CD4-positive, alpha-beta T cell (primary cell): ENCODE measurements at regions of chrX and their contacts with region 1.

Region 1: GRCh38 chrX:2608638-2609430 is 82.3 kb upstream of the CD99 start:
- DNase-seq: peak; percentile 73 to 94 (median 84)
- ATAC-seq: peak; percentile 94
- H3K4me3 ChIP-seq: peak overlapping the region; percentile 96
- H3K4me3 Mint-ChIP-seq: peak overlapping the region; percentile 98
- H3K27ac ChIP-seq: peak overlapping the region; percentile 14 to 43
- H3K27ac Mint-ChIP-seq: peak overlapping the region; percentile 82
- H3K4me1 ChIP-seq: peaks cover 34% of the 10 kb centered on the region
- H3K4me1 Mint-ChIP-seq: peaks cover 63% of the 10 kb centered on the region
- H3K27me3 ChIP-seq: no peaks in the 10 kb centered on the region
- H3K27me3 Mint-ChIP-seq: no peaks in the 10 kb centered on the region
- CTCF ChIP-seq: no peak

Region 2: GRCh38 chrX:1591102-1591900 is 1017.5 kb before region 1 on chrX and contains the start of gene AKAP17A:
- CTCF ChIA-PET with region 1: no interaction called
- POLR2A ChIA-PET with region 1: no interaction called
- intact Hi-C with region 1: loop called in 1 of 2 experiments (anchors 5 kb)
- DNase-seq: peak; percentile 93 to 100 (median 98)
- ATAC-seq: peak; percentile 89
- H3K4me3 ChIP-seq: peak within 1 kb of the TSS; percentile 80
- H3K4me3 Mint-ChIP-seq: peak within 1 kb of the TSS; percentile 95
- H3K27ac ChIP-seq: peak within 1 kb of the TSS; percentile 53 to 55
- H3K27ac Mint-ChIP-seq: peak within 1 kb of the TSS; percentile 90
- H3K4me1 ChIP-seq: peaks cover 42% of the 10 kb centered on the region
- H3K4me1 Mint-ChIP-seq: peaks cover 43% of the 10 kb centered on the region
- H3K27me3 ChIP-seq: no peaks in the 10 kb centered on the region
- H3K27me3 Mint-ChIP-seq: no peaks in the 10 kb centered on the region
- CTCF ChIP-seq: no peak
- total RNA-seq, gene AKAP17A: 143 to 149 TPM

Region 3: GRCh38 chrX:1657367-1658070 is 951.3 kb before region 1 on chrX:
- CTCF ChIA-PET with region 1: no interaction called
- POLR2A ChIA-PET with region 1: no interaction called
- intact Hi-C with region 1: loop called in 1 of 2 experiments (anchors 5 kb)
- DNase-seq: peak in 13 of 14 experiments; percentile 11 to 91 (median 47)
- ATAC-seq: peak; percentile 37
- H3K4me3 ChIP-seq: peak overlapping the region; percentile 65
- H3K4me3 Mint-ChIP-seq: peak overlapping the region; percentile 87
- H3K27ac ChIP-seq: peak overlapping the region; percentile 59 to 80
- H3K27ac Mint-ChIP-seq: peak overlapping the region; percentile 96
- H3K4me1 ChIP-seq: peaks cover 36% of the 10 kb centered on the region
- H3K4me1 Mint-ChIP-seq: peaks cover 52% of the 10 kb centered on the region
- H3K27me3 ChIP-seq: no peaks in the 10 kb centered on the region
- H3K27me3 Mint-ChIP-seq: no peaks in the 10 kb centered on the region
- CTCF ChIP-seq: no peak

Region 4: GRCh38 chrX:2145692-2146367 is 463.0 kb before region 1 on chrX:
- CTCF ChIA-PET with region 1: no interaction called
- POLR2A ChIA-PET with region 1: no interaction called
- intact Hi-C with region 1: no loop called
- DNase-seq: no peak
- ATAC-seq: no peak
- H3K4me3 ChIP-seq: no peak overlapping the region
- H3K4me3 Mint-ChIP-seq: no peak overlapping the region
- H3K27ac ChIP-seq: no peak overlapping the region
- H3K27ac Mint-ChIP-seq: no peak overlapping the region
- H3K4me1 ChIP-seq: no peaks in the 10 kb centered on the region
- H3K4me1 Mint-ChIP-seq: no peaks in the 10 kb centered on the region
- H3K27me3 ChIP-seq: no peaks in the 10 kb centered on the region
- H3K27me3 Mint-ChIP-seq: no peaks in the 10 kb centered on the region
- CTCF ChIP-seq: no peak

Region 5: GRCh38 chrX:2325076-2325784 is 283.6 kb before region 1 on chrX:
- CTCF ChIA-PET with region 1: no interaction called
- POLR2A ChIA-PET with region 1: no interaction called
- intact Hi-C with region 1: loop called in 1 of 2 experiments (anchors 10 kb)
- DNase-seq: peak in 10 of 14 experiments; percentile 1 to 81 (median 20)
- ATAC-seq: no peak
- H3K4me3 ChIP-seq: no peak overlapping the region
- H3K4me3 Mint-ChIP-seq: peak overlapping the region; percentile 88
- H3K27ac ChIP-seq: peak overlapping the region in 1 of 2 donors; percentile 19
- H3K27ac Mint-ChIP-seq: no peak overlapping the region
- H3K4me1 ChIP-seq: no peaks in the 10 kb centered on the region
- H3K4me1 Mint-ChIP-seq: no peaks in the 10 kb centered on the region
- H3K27me3 ChIP-seq: no peaks in the 10 kb centered on the region
- H3K27me3 Mint-ChIP-seq: no peaks in the 10 kb centered on the region
- CTCF ChIP-seq: no peak

Region 6: DNA sequence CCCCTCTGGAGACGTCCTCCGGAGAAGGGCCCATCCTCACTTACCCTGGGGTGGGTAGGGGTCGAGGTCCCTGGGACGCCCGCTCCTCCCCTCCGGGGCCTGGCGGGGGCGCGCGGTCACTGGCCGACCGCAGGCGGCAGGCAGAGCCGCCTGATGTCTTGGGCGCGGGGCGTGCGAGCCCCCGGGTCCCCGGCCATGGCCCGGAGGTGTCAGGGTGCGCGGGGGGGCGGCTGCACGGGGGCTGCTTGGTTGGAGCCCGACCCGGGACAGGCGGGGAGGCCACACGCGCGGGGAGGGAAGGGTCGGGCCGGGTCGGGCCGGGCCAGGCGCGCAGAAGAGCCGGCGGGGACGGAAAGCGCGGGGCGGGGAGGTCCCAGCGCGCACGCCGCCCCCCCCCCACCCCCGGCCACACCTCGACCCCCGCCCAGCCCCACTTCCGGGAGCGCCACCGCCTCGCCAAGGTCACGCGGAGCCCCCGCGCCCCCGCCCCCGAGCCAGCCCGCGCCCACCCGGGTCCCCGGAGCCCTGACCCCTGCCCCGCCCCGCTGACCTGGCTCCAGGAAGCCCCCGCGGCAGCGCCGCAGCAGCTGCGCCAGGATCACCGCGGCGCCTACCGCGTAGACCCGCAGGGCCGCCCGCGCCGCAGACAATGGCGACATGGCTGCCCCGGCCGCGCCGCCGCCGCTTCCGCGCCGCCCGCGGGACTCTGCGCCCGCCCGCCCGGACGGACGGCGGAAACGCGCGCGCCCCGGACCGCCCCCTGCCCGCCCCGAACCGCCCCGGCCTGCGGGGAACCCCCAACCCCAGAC is 108.4 kb before region 1 on chrX and contains the starts of genes DHRSX and ZBED1:
- CTCF ChIA-PET with region 1: no interaction called
- POLR2A ChIA-PET with region 1: no interaction called
- intact Hi-C with region 1: loop called in 1 of 2 experiments (anchors 1 kb)
- DNase-seq: peak; percentile 12 to 77 (median 40)
- ATAC-seq: peak; percentile 63
- H3K4me3 ChIP-seq: peak within 1 kb of the TSS; percentile 67
- H3K4me3 Mint-ChIP-seq: peak within 1 kb of the TSS; percentile 89
- H3K27ac ChIP-seq: peak within 1 kb of the TSS; percentile 43 to 55
- H3K27ac Mint-ChIP-seq: peak within 1 kb of the TSS; percentile 86
- H3K4me1 ChIP-seq: peaks cover 32% of the 10 kb centered on the region
- H3K4me1 Mint-ChIP-seq: peaks cover 31% of the 10 kb centered on the region
- H3K27me3 ChIP-seq: no peaks in the 10 kb centered on the region
- H3K27me3 Mint-ChIP-seq: no peaks in the 10 kb centered on the region
- CTCF ChIP-seq: no peak
- total RNA-seq, gene DHRSX: 12.1 to 13.9 TPM
- total RNA-seq, gene ZBED1: 15.8 to 16.1 TPM